HEK293T (cell line): ENCODE measurements at regions of chr11 and their contacts with region 1.

Region 1: DNA sequence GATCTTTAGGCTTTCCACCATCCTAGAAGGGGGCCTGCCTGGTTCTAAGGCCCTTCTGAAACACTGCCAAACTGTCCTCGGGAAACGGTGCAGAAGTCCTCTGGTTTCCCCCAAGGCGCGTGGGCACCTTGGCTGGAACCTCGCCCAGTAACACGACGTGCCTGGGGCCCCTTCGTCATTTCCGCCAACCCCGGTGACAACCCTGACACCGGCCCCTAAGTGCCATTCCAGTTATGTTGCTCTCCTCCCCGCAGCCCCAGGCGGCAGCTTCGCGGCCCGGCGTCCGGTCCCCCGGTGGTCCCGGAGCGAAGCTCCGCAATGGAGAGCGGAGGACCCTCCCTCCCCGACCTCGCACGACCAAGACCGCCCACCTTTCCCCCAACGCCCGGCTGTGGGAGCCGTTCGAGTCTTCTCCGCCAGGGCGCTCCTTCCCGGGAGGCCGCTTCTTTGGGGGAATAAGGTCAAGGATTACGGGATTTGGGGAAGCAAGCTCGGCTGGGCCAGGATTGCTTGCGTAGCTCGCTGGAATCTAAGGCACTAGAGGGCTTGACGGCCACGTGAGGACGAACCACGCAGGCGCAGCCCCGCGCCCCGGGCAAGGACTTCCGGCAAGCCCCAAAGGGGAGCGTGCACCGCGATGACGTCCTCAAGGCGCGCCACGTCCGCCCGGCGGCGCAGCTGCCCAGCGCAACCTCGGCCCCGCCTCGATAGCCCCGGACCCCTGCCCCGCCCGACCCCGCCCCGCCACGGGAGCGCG is 626 bp downstream of the RNH1 start:
- DNase-seq: peak; percentile 98

Region 2: GRCh38 chr11:477052-477715 is 29.2 kb before region 1 on chr11:
- CTCF ChIA-PET with region 1: no interaction called
- POLR2A ChIA-PET with region 1: no interaction called
- DNase-seq: no peak

Region 3: DNA sequence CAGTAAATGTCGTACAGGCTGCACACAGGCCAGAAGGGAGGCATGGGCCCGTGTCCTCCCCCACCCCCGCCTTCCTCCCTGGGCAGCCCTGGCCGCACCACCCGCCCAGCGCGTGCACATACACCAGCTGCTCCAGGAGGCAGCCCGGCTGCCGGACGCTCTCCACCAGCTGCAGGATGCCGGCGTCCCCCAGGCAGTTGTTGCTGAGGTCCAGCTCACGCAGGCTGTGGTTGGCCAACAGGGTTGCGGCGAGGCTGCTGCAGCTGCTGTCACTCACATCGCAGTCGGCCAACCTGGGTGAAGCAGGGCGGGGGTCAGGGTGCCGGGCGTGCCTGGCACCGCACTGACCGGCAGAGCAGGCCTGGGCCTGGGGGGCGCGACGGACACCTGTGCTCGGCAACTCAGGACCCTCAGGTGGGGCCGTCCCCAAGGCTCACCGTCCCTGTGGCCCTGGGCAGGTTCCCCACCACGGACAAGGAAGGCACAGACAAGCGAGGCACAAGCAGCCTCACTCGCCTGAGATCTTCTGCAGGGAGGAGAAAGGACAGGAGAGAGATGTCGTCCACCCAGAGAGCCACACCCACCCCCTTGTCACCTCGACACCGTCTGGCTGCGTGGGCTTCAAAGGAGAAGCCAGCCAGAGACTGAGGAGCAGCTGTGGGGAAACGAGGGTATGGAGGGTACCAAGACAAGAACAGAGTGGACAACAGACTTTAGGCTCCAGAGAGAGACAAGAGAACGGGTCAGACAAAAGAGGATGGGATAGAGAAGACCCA is 11.5 kb before region 1 on chr11:
- CTCF ChIA-PET with region 1: no interaction called
- POLR2A ChIA-PET with region 1: interaction called, 13 read pairs
- DNase-seq: no peak

Region 4: DNA sequence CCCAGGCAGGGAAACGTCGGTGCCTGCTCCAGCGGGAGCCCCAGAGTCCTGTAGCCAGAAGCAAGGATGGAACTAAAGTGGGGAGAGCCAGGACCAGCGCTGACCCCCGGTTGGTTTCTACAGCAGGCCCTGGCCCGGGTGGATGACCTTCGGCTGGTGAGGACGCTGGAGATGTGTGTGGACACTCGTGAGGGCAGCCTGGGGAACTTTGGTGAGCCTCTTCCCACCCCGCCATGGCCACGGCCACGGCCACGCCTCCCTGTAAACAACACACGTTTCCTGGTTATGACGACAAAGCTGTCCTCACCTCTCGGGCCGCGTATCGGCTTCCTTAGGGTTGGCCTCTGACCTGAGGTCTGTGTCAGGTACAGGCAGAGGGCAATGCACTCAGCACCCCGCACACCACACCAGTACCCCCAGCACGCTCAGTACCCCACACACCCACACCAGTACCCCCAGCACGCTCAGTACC is 35.0 kb after region 1 on chr11:
- CTCF ChIA-PET with region 1: no interaction called
- POLR2A ChIA-PET with region 1: no interaction called
- DNase-seq: no peak